Vagina (tissue), 2 donors: ENCODE measurements at regions of chr15 and their contacts with region 1.

Region 1: GRCh38 chr15:72970933-72971770 is 81.1 kb upstream of the NEO1 start:
- DNase-seq: no peak
- H3K4me3 ChIP-seq: peak overlapping the region; percentile 28 to 40
- H3K27ac ChIP-seq: peak overlapping the region; percentile 69
- H3K4me1 ChIP-seq: peaks cover 11% of the 10 kb centered on the region
- H3K27me3 ChIP-seq: no peaks in the 10 kb centered on the region
- CTCF ChIP-seq: no peak
- POLR2A ChIP-seq: no peak

Region 2: GRCh38 chr15:72859017-72859756 is 112.0 kb before region 1 on chr15:
- intact Hi-C with region 1: no loop called
- DNase-seq: peak in 1 of 2 donors; percentile 91
- H3K4me3 ChIP-seq: no peak overlapping the region
- H3K27ac ChIP-seq: no peak overlapping the region
- H3K4me1 ChIP-seq: no peaks in the 10 kb centered on the region
- H3K27me3 ChIP-seq: no peaks in the 10 kb centered on the region
- CTCF ChIP-seq: no peak
- POLR2A ChIP-seq: no peak

Region 3: DNA sequence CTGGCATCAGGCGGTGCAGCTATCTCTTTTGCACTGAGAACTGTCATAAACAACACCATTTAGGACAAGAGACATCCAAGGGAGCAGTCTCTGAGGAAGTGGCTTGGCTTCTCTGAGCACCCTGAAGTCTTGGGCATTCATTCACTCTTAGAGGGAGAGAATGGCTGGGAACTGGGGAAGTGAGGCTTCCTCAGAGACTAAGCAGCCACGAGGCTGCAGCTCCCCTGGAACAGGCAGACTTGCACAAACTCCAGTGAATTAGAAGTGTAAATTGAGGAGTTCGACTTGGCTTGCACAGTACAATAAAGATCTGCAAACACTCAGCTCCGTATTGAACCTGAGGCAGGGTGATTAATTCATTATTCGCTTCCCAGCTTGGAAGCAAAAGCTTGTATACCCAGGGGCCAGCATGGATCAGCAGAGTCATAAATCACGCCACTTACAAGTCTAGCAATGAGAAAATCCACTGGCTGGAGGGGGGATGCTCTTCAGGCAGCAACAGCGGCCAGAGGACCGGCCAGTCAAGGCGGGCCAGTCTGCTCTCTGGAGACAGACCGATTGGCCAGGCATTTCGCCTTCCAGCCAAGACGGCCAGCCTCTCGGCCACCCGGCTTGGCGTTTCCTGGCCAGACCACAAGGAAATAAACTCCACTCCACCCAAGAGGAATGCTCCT is 68.8 kb before region 1 on chr15:
- intact Hi-C with region 1: no loop called
- DNase-seq: no peak
- H3K4me3 ChIP-seq: no peak overlapping the region
- H3K27ac ChIP-seq: no peak overlapping the region
- H3K4me1 ChIP-seq: peaks cover 14% of the 10 kb centered on the region
- H3K27me3 ChIP-seq: no peaks in the 10 kb centered on the region
- CTCF ChIP-seq: no peak
- POLR2A ChIP-seq: no peak

Region 4: GRCh38 chr15:73051811-73052678 is 80.9 kb after region 1 on chr15 and contains the start of gene NEO1:
- intact Hi-C with region 1: loop called (anchors 10 kb)
- DNase-seq: peak in 1 of 2 donors; percentile 90
- H3K4me3 ChIP-seq: peak within 1 kb of the TSS; percentile 71 to 87
- H3K27ac ChIP-seq: peak within 1 kb of the TSS; percentile 95
- H3K4me1 ChIP-seq: peaks cover 28% of the 10 kb centered on the region
- H3K27me3 ChIP-seq: no peaks in the 10 kb centered on the region
- CTCF ChIP-seq: no peak
- POLR2A ChIP-seq: peak in 1 of 2 donors; percentile 52
- total RNA-seq, gene NEO1: 21.9 TPM